ENCODE measurements at regions of chr3 and their contacts with region 1.

Region 1: DNA sequence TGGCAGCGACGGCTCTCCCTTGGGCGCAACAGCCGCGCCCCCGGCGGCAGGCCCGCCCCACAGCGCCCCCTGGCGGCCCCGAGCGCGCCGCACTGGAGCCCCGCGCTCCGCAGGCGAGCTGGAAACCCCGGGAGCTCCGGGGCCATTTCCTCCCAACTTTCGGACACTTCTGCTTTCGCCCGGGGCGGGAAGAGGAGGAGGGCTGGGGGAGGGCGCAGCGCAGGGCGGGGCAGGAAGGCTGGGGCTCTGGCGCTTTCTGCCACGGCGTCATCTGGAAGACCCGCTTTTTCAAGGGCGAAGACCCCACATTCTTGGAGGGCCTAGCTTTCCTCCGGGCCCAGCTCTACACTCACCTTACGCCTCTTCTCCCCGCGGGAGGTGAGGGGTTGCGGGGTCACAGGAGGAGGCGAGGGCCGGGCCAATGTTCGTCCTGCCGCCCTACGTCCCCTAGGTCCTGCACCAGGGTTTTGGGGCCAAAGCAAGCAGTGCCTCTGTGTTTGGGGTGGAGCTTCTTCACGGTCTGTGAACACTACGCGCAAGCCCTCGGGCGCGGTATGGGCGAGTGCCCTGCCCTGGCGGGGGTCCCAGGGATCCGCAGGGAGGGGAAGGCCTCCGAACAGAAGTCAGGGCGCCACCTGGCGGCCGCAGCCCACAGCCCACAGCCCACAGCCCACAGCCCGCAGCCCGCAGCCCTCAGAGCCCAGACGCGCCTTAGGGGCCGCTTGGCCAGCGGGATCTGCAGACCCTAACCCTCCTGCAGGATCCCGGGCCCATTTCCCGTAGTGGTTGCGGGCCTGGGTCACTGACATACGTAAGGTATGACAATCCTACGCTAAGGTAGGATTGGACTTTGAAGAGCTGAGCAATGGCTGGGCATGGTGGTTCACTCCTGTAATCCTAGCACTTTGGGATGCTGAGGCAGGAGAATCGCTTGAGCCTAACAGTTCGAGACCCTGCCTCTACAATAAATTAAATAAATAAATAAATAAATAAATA is 31.1 kb downstream of the FOXL2 start:
- DNase-seq: peak; percentile 97
- ATAC-seq: peak; percentile 92
- H3K4me3 Mint-ChIP-seq: peak overlapping the region; percentile 66
- H3K27ac Mint-ChIP-seq: 0 out of 2 replicates have a peak overlapping the region, but pooled peaks have one; percentile 65
- H3K4me1 Mint-ChIP-seq: peaks cover 3% of the 10 kb centered on the region
- H3K27me3 Mint-ChIP-seq: peaks cover 10% of the 10 kb centered on the region
- CTCF ChIP-seq: peak; percentile 93

Region 2: GRCh38 chr3:138594150-138594934 is 321.5 kb before region 1 on chr3 and contains the start of gene CEP70:
- CTCF ChIA-PET with region 1: interaction called, 108 read pairs
- POLR2A ChIA-PET with region 1: interaction called, 13 read pairs
- DNase-seq: peak; percentile 95
- ATAC-seq: peak; percentile 93
- H3K4me3 Mint-ChIP-seq: peak within 1 kb of the TSS; percentile 96
- H3K27ac Mint-ChIP-seq: peak within 1 kb of the TSS; percentile 95
- H3K4me1 Mint-ChIP-seq: peaks cover 21% of the 10 kb centered on the region
- H3K27me3 Mint-ChIP-seq: no peaks in the 10 kb centered on the region
- CTCF ChIP-seq: peak; percentile 86
- total RNA-seq, gene CEP70: 27.2 to 34.8 TPM (median 33.5 TPM) in 3 replicates

Region 3: GRCh38 chr3:138717348-138717747 is 198.5 kb before region 1 on chr3:
- CTCF ChIA-PET with region 1: interaction called, 15 read pairs
- POLR2A ChIA-PET with region 1: no interaction called
- DNase-seq: no peak
- ATAC-seq: no peak
- H3K4me3 Mint-ChIP-seq: no peak overlapping the region
- H3K27ac Mint-ChIP-seq: no peak overlapping the region
- H3K4me1 Mint-ChIP-seq: no peaks in the 10 kb centered on the region
- H3K27me3 Mint-ChIP-seq: no peaks in the 10 kb centered on the region
- CTCF ChIP-seq: no peak

Region 4: GRCh38 chr3:138786788-138787278 is 129.0 kb before region 1 on chr3:
- CTCF ChIA-PET with region 1: interaction called, 30 read pairs
- POLR2A ChIA-PET with region 1: no interaction called
- DNase-seq: no peak
- ATAC-seq: no peak
- H3K4me3 Mint-ChIP-seq: no peak overlapping the region
- H3K27ac Mint-ChIP-seq: no peak overlapping the region
- H3K4me1 Mint-ChIP-seq: peaks cover 9% of the 10 kb centered on the region
- H3K27me3 Mint-ChIP-seq: no peaks in the 10 kb centered on the region
- CTCF ChIP-seq: no peak

Region 5: DNA sequence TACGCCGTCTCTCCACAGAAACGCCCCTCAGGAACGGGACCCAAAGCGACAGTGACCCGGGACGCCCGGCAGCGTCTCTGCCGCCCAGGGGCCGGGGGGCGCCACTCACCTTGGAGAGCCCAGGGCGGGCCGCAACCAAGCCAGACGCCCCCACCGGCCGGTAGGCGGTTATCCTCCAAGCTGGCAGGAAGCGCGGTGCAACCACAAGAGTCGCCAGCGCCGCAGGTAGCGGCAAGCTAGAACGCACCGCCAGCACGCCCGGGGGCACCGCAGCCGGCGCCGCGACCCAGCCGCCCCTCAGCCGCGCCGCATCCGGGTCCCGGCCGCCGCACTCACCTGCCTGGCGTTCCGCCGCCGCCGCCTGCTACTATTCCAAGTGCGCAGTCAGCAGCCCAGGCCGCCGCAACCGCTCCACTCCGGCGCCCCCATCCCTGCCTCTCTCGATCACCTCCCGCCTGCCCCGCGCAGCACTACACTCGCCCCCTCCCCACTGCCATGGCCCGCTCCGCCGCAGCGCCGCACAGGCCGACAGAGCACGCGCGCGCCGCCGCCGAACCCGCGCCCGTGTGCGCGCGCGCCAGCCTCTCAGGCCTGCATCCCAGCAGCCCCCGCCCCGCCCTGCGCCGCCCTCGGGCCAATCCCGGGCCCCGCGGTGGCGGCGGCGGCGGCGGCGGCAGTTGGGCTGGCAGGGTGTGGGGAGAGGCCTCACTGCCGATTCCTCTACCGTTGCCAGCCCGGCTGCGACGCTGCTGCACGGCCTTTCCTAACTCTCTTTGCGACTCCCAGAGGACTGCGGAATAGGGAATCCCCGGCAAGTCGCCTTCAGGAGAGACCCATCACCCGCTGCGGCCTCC is 81.2 kb before region 1 on chr3 and contains the start of gene PIK3CB:
- CTCF ChIA-PET with region 1: interaction called, 21 read pairs
- POLR2A ChIA-PET with region 1: interaction called, 7 read pairs
- DNase-seq: peak; percentile 93
- ATAC-seq: peak; percentile 93
- H3K4me3 Mint-ChIP-seq: peak within 1 kb of the TSS; percentile 88
- H3K27ac Mint-ChIP-seq: peak within 1 kb of the TSS; percentile 99
- H3K4me1 Mint-ChIP-seq: peaks cover 30% of the 10 kb centered on the region
- H3K27me3 Mint-ChIP-seq: no peaks in the 10 kb centered on the region
- CTCF ChIP-seq: no peak
- total RNA-seq, gene PIK3CB: 36.0 to 40.0 TPM (median 38.5 TPM) in 3 replicates

Region 6: DNA sequence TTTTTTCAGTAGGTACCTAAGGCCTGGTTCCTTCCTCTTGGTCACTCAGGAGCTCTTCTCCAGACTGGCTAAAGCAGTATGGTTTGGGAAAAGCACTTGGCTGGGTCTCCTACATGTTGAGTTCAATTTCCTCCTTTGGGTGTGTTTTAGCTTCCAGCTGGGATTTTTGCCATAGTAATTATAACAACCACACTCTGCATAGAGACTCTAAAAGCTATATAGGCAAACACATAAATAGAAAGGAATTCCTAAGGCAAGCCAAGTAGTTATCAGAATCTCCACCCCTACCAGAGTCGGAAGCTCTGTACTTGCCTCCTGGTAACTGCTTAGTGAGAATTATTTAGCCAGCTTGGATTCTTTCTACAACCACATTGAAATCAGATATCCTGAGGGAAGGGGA is 17.5 kb before region 1 on chr3:
- CTCF ChIA-PET with region 1: interaction called, 49 read pairs
- POLR2A ChIA-PET with region 1: no interaction called
- DNase-seq: no peak
- ATAC-seq: no peak
- H3K4me3 Mint-ChIP-seq: no peak overlapping the region
- H3K27ac Mint-ChIP-seq: no peak overlapping the region
- H3K4me1 Mint-ChIP-seq: no peaks in the 10 kb centered on the region
- H3K27me3 Mint-ChIP-seq: no peaks in the 10 kb centered on the region; the same call in 1 of the 2 replicates
- CTCF ChIP-seq: no peak

Region 7: GRCh38 chr3:138962854-138963560 is 47.2 kb after region 1 on chr3:
- CTCF ChIA-PET with region 1: no interaction called
- POLR2A ChIA-PET with region 1: no interaction called
- DNase-seq: no peak
- ATAC-seq: peak; percentile 52
- H3K4me3 Mint-ChIP-seq: no peak overlapping the region
- H3K27ac Mint-ChIP-seq: no peak overlapping the region
- H3K4me1 Mint-ChIP-seq: peaks cover 3% of the 10 kb centered on the region; the same call in 1 of the 2 replicates
- H3K27me3 Mint-ChIP-seq: peaks cover 45% of the 10 kb centered on the region
- CTCF ChIP-seq: no peak

Measured in WTC11 (cell line).